Prostate gland (tissue), 2 donors: ENCODE measurements at regions of chr1 and their contacts with region 1.

Region 1: DNA sequence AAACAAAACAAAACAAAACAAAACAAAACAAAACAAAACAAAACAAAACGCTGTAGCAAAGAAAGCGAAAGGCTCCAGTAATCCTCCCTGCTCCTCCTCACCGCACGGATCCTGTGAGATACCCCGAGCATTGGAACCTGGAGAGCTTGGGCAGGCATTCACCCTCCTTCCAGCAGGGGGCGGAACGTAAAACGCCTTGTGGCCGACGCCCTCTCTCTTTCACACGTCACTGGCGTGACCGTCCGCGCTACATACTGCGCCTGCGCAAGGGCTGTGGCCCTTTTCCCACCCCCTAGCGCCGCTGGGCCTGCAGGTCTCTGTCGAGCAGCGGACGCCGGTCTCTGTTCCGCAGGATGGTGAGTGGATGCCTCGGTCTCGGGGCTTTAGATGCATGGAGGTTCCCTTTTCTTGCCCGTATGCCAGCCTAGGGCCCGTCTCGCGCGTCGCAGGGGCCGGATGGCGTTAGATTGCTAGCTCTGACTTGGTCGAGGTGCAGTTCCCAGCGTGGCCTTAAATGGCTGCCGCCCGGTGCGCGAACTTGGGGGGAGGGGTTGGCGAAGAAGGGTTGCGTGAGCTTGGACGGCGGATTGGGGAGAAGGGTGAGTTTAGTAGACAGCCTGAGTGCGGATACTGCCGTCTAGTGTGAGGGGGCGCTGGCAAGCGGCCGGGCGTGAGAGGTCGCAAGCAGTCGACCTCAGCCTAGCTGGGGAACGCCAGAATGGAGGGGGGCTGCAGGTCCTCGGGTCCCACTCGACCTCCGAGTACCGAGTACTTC is at the start of gene RPL5:
- DNase-seq: peak; percentile 95
- H3K4me3 ChIP-seq: peak within 1 kb of the TSS; percentile 91 to 94
- H3K27ac ChIP-seq: peak within 1 kb of the TSS; percentile 92 to 93
- H3K4me1 ChIP-seq: peaks cover 16% of the 10 kb centered on the region
- H3K27me3 ChIP-seq: no peaks in the 10 kb centered on the region
- CTCF ChIP-seq: peak; percentile 94 to 99 (median 98)
- POLR2A ChIP-seq: peak; percentile 90
- total RNA-seq, gene RPL5: 1,039 to 1,980 TPM

Region 2: GRCh38 chr1:92784639-92785500 is 47.1 kb before region 1 on chr1 and contains the start of gene EVI5:
- intact Hi-C with region 1: loop called (anchors 5 kb)
- DNase-seq: peak; percentile 92
- H3K4me3 ChIP-seq: peak within 1 kb of the TSS; percentile 58 to 93
- H3K27ac ChIP-seq: peak within 1 kb of the TSS; percentile 91 to 98
- H3K4me1 ChIP-seq: peaks cover 5% of the 10 kb centered on the region
- H3K27me3 ChIP-seq: no peaks in the 10 kb centered on the region
- CTCF ChIP-seq: peak in 2 of 4 experiments; percentile 2 to 23
- POLR2A ChIP-seq: peak; percentile 71
- total RNA-seq, gene EVI5: 22.2 to 38.6 TPM